Tibial artery (tissue), 4 donors: ENCODE measurements at regions of chr19 and their contacts with region 1.

Region 1: DNA sequence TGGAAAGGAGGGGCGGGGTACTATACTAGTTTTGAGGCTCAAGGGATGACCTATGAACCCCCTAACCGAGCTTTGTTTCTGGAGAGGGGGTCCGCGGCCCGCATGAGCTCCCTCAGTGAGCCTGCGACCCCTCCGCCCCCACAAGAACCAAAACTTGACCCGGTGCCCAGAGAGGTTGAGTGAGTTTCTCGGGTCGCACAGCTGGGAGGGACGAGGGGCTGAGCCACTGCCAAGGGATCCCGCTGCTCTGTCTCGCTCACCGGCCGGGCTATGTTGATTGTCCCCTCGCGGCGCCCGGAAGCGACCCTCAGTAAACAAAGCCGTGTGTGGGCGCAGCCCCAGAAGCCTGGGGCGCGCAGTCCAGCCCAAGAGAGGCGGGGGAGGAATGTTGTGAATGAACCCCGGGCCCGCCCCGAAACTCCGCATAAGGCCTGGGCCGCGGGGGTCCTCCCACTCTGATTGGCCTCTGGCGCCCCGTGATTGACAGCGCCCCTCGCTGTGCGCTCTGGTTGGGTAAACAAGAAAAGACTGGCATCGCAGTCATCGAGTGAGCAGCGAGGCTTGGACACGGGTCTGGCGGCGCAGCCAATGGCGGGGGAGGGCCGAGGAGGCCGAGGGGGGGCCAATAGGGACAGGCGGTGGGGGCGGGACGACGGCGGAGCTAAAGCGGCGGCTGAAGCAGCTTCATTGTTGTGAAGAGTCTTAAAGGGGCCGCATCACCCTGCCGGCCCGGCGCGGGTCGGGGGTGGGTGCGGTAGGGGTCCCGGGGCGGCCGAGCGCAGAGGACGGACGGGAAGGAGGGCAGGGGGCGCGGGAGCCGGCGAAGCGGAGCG is at the start of gene ZSWIM4:
- DNase-seq: peak; percentile 99 to 100
- H3K4me3 ChIP-seq: peak within 1 kb of the TSS; percentile 68 to 70
- H3K27ac ChIP-seq: peak within 1 kb of the TSS; percentile 88
- H3K4me1 ChIP-seq: peaks cover 0 to 54% (median 34%) of the 10 kb centered on the region in 4 donors
- H3K27me3 ChIP-seq: no peaks in the 10 kb centered on the region
- CTCF ChIP-seq: peak in 1 of 2 experiments; percentile 16

Region 2: DNA sequence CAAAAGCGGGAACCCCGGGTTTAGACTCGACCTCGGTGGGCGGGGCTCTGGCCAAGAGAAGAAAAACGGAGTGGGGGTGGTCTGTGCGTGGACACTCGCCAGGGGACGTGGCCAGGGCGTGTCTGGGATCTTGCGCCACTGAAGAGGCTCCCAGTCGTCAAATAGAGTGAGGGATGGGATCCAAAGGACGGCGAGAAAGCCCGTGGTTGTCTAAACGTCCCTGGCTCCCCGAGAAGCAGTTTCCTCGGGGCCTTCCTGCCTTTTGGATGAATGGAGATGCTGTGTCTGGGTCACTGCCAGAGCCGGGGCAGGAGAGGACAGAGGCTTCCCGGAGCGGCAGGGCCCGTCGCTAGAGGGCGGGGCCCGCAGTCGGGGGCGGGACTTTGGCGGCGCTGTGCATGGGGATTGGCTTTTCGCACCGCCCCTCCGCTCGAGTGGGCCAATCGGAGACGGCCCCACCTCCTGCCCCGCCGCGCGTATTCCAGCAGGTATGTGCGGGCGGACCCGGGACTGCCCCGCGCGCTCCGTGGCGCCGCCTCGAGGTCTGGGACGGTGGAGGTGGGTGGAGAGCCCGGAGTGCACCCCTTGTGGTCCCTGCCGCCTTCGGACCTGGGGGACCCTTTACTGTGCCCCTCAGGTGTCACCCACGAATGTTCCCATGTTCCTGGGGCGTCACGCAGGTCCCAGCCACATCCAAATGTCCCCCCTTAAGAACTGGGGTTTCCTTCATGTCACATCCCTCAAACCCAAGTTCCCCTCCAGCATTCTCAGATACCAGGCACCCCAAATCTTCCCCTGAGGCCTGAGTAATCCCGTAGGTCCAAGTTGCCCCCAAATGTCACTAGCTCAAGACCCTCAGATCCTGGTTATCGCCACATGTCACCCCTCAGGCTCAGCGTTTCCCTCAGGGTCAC is 38.6 kb after region 1 on chr19:
- intact Hi-C with region 1: loop called (anchors 5 kb)
- DNase-seq: peak; percentile 95 to 98
- H3K4me3 ChIP-seq: peak overlapping the region in 1 of 2 donors; percentile 21
- H3K27ac ChIP-seq: peak overlapping the region; percentile 99
- H3K4me1 ChIP-seq: peaks cover 11 to 64% (median 57%) of the 10 kb centered on the region in 4 donors
- H3K27me3 ChIP-seq: no peaks in the 10 kb centered on the region
- CTCF ChIP-seq: peak; percentile 14 to 25